ENCODE measurements at regions of chr1 and their contacts with region 1.

Region 1: DNA sequence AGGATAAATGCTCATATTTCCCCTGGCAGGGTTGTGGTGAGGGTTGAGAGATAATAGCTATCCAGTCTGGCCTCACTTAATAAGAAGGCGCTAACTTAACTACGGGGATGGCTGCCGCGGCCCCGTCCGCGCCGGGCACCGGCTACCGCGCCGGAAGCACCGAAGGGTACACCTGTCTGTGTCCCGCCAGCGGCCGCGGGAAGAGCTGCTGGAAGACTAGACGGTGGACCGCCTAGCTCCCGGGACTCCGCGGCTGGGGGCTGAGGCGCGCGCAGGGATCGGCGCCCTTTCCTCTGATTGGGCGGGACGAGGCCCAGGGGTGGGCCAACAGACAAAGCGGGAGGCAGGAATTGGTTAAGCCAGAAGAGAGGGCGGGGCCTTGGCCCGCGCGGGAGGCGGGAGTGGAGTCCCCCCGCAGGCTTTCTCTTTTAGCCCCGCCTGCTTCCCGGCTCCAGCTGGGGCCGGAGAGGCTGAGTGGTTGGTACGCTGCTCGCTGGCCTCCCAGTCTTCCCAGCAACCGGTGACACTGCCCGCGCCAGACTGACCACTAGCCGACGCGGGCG is at the start of gene ZNF672:
- DNase-seq: peak; percentile 77
- ATAC-seq: peak; percentile 84
- H3K4me3 ChIP-seq: peak within 1 kb of the TSS; percentile 92
- H3K27ac ChIP-seq: peak within 1 kb of the TSS; percentile 96
- H3K4me1 ChIP-seq: peaks cover 13% of the 10 kb centered on the region
- H3K27me3 ChIP-seq: no peaks in the 10 kb centered on the region
- CTCF ChIP-seq: no peak
- EP300 ChIP-seq: no peak
- POLR2A ChIP-seq: peak; percentile 83
- RAD21 ChIP-seq: no peak
- polyA plus RNA-seq, gene ZNF672: 2.9 to 5.2 TPM

Region 2: DNA sequence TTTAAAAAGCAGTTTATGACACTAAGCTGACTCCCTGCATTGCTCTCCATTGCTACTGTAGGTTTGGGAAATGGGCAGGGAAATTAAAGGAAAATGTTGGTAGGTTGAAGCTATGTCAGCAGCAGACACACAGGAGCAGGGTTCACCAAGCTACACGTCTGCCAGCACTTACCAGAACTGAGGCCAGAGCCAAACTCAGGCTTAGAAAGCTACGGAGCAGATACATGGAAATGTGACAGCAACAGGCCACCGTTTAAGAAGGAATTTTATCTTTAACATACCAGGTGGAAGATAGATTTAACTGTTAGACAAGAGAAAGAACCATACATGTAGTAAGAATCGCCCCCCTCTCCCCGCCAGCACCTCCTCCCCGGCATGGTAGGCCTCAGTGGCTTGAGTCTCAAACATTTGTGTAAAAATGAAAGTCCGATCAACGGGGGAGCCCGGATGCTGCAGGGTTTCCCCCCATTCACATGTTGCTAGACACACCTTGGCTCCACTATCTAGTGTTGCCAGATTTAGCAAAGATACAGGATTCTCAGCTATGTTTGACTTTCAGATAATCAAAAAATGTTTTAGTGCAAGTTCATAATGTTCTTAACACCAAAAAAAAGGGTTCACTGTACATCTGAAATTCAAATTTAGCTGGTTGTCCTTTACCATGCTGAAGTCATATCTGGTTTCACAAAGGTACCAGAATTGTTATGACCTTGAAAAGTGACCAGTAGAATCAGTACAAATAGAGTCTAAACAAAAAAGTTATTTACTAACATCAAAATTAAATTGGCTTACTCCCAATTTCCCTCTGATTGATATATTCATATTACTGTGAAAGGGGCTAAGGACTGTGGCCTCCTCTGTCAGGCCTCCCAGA is 209.7 kb before region 1 on chr1:
- CTCF ChIA-PET with region 1: no interaction called
- POLR2A ChIA-PET with region 1: no interaction called
- RAD21 ChIA-PET with region 1: no interaction called
- SMC1A ChIA-PET with region 1: no interaction called
- in situ Hi-C with region 1: no loop called
- intact Hi-C with region 1: no loop called
- DNase-seq: no peak
- ATAC-seq: no peak
- H3K4me3 ChIP-seq: no peak overlapping the region
- H3K27ac ChIP-seq: no peak overlapping the region
- H3K4me1 ChIP-seq: no peaks in the 10 kb centered on the region
- H3K27me3 ChIP-seq: no peaks in the 10 kb centered on the region
- CTCF ChIP-seq: no peak
- EP300 ChIP-seq: no peak
- POLR2A ChIP-seq: no peak
- RAD21 ChIP-seq: no peak

Region 3: DNA sequence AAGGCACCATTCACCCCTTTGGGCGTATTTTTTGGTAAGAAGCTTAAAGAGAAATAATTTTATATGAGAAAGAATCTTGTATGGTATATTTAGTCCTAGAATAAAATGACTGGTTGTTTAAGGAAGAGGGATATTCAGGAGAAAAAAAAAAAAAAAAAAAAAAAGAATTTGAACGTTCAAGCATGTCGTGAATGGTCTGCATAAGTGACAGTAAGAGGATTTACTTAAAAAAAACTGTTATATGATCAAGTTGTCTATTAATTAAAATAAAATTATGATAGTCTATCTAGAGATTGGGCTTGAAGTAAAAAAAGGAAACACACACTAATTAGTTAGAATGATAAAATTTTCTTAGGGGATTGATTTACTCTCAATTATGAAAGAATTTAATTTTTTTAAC is 123.6 kb before region 1 on chr1:
- CTCF ChIA-PET with region 1: no interaction called
- POLR2A ChIA-PET with region 1: no interaction called
- RAD21 ChIA-PET with region 1: no interaction called
- SMC1A ChIA-PET with region 1: no interaction called
- in situ Hi-C with region 1: no loop called
- intact Hi-C with region 1: no loop called
- DNase-seq: no peak
- ATAC-seq: no peak
- H3K4me3 ChIP-seq: no peak overlapping the region
- H3K27ac ChIP-seq: no peak overlapping the region
- H3K4me1 ChIP-seq: no peaks in the 10 kb centered on the region
- H3K27me3 ChIP-seq: no peaks in the 10 kb centered on the region
- CTCF ChIP-seq: no peak
- EP300 ChIP-seq: no peak
- POLR2A ChIP-seq: no peak
- RAD21 ChIP-seq: no peak

Region 4: DNA sequence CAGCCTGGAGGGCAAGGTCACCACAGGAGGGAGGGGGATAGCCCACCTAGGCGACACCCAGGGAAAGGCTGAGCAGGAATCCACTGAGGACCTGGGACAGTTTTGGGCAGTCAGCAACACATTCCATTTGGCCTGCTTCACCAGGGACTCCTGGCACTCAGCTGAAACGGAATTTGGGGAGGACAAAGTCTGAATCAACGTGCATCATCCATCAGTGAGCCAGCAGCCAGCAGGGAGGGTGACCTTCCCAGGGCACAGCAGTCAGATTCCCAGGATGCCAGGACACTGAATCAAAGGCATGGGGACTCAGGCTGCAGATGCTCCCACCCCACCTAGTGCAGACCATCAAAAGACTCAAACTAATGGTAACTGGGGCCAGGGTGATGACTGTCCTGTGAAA is 16.8 kb before region 1 on chr1:
- CTCF ChIA-PET with region 1: interaction called, 79 read pairs
- POLR2A ChIA-PET with region 1: interaction called, 83 read pairs
- RAD21 ChIA-PET with region 1: interaction called, 46 read pairs
- SMC1A ChIA-PET with region 1: interaction called, 48 read pairs
- in situ Hi-C with region 1: no loop called
- intact Hi-C with region 1: loop called (anchors 1 kb)
- DNase-seq: no peak
- ATAC-seq: no peak
- H3K4me3 ChIP-seq: no peak overlapping the region
- H3K27ac ChIP-seq: no peak overlapping the region; the same call in 1 of the 2 replicates
- H3K4me1 ChIP-seq: peaks cover 22% of the 10 kb centered on the region
- H3K27me3 ChIP-seq: no peaks in the 10 kb centered on the region
- CTCF ChIP-seq: no peak
- EP300 ChIP-seq: no peak
- POLR2A ChIP-seq: no peak
- RAD21 ChIP-seq: no peak

Region 5: DNA sequence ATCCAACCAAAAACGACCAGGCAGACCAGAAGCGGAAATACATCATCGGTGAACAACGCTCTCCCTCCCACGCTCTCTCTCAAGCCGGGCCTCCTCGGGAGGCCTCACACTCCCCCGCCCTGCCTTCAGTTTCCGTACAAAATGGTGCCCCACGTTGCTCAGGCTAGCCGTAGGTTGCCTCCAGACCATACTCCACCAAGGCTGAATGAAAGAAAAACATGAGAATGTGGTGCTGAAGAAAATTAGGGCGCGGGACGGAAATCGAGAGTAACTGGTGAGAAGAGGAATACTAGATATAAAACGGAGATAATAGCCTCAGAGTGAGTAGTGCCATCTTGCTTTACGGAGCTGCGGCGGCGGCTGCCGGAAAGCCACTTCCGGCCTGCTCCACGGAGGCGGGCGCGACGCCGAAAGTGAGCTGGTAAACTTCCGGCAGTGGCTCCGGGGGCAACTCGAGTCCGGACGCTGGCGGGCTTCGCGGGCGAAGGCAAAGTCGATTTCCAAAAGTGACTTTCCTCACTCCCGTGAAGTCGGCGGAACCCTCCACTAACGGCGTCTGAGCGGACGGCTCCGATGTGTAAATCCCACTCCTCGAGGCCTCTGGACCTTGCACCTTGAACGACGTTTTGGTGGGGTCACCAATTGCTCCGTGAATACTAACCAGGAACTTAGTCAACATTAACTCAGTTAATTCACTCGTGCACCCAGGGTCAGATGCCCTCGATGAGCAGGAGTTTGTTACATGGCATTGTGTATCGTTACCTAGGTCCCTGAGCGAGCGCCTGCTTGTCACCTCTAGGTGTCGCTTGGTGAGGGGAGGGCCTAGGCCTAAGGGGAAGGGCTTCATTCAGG is 11.7 kb before region 1 on chr1 and contains the start of gene SH3BP5L:
- CTCF ChIA-PET with region 1: interaction called, 79 read pairs
- POLR2A ChIA-PET with region 1: interaction called, 83 read pairs
- RAD21 ChIA-PET with region 1: interaction called, 46 read pairs
- SMC1A ChIA-PET with region 1: interaction called, 48 read pairs
- in situ Hi-C with region 1: no loop called
- intact Hi-C with region 1: loop called (anchors 1 kb)
- DNase-seq: peak; percentile 85
- ATAC-seq: peak; percentile 91
- H3K4me3 ChIP-seq: peak within 1 kb of the TSS; percentile 79
- H3K27ac ChIP-seq: peak within 1 kb of the TSS; percentile 98
- H3K4me1 ChIP-seq: peaks cover 13% of the 10 kb centered on the region
- H3K27me3 ChIP-seq: no peaks in the 10 kb centered on the region
- CTCF ChIP-seq: peak; percentile 83 to 89 (median 84); a peak in 5 of 6 replicates
- EP300 ChIP-seq: no peak
- POLR2A ChIP-seq: peak; percentile 82
- RAD21 ChIP-seq: peak; percentile 51; the same call in 1 of the 2 replicates
- polyA plus RNA-seq, gene SH3BP5L: 1.1 to 1.6 TPM

Region 6: GRCh38 chr1:248858891-248859889 is 21.3 kb after region 1 on chr1 and contains the start of gene ZNF692:
- CTCF ChIA-PET with region 1: interaction called, 60 read pairs
- POLR2A ChIA-PET with region 1: interaction called, 47 read pairs
- RAD21 ChIA-PET with region 1: interaction called, 25 read pairs
- SMC1A ChIA-PET with region 1: interaction called, 20 read pairs
- in situ Hi-C with region 1: no loop called
- intact Hi-C with region 1: loop called (anchors 1 kb)
- DNase-seq: peak; percentile 85
- ATAC-seq: peak; percentile 86
- H3K4me3 ChIP-seq: peak within 1 kb of the TSS; percentile 95
- H3K27ac ChIP-seq: peak within 1 kb of the TSS; percentile 82
- H3K4me1 ChIP-seq: peaks cover 11% of the 10 kb centered on the region
- H3K27me3 ChIP-seq: no peaks in the 10 kb centered on the region
- CTCF ChIP-seq: no peak
- EP300 ChIP-seq: no peak
- POLR2A ChIP-seq: peak; percentile 91
- RAD21 ChIP-seq: no peak
- polyA plus RNA-seq, gene ZNF692: 5.3 to 18.5 TPM

Region 7: GRCh38 chr1:248873409-248873992 is 35.6 kb after region 1 on chr1:
- CTCF ChIA-PET with region 1: interaction called, 9 read pairs
- POLR2A ChIA-PET with region 1: interaction called, 12 read pairs
- RAD21 ChIA-PET with region 1: interaction called, 9 read pairs
- SMC1A ChIA-PET with region 1: interaction called, 5 read pairs
- in situ Hi-C with region 1: no loop called
- intact Hi-C with region 1: loop called (anchors 1 kb)
- DNase-seq: peak; percentile 98
- ATAC-seq: peak; percentile 87
- H3K4me3 ChIP-seq: peak overlapping the region; percentile 65
- H3K27ac ChIP-seq: peak overlapping the region; percentile 85
- H3K4me1 ChIP-seq: peaks cover 4% of the 10 kb centered on the region; the same call in 1 of the 2 replicates
- H3K27me3 ChIP-seq: no peaks in the 10 kb centered on the region
- CTCF ChIP-seq: no peak
- EP300 ChIP-seq: peak in 1 of 2 experiments; percentile 77; a peak in 1 of 4 replicates
- POLR2A ChIP-seq: peak; percentile 85
- RAD21 ChIP-seq: no peak

Region 8: GRCh38 chr1:248906009-248906752 is 68.3 kb after region 1 on chr1 and contains the start of gene PGBD2:
- CTCF ChIA-PET with region 1: interaction called, 8 read pairs
- POLR2A ChIA-PET with region 1: interaction called, 10 read pairs
- RAD21 ChIA-PET with region 1: interaction called, 6 read pairs
- SMC1A ChIA-PET with region 1: interaction called, 6 read pairs
- in situ Hi-C with region 1: no loop called
- intact Hi-C with region 1: loop called (anchors 1 kb)
- DNase-seq: peak; percentile 66
- ATAC-seq: peak; percentile 94
- H3K4me3 ChIP-seq: peak within 1 kb of the TSS; percentile 92
- H3K27ac ChIP-seq: peak within 1 kb of the TSS; percentile 82
- H3K4me1 ChIP-seq: peaks cover 2% of the 10 kb centered on the region; the same call in 1 of the 2 replicates
- H3K27me3 ChIP-seq: no peaks in the 10 kb centered on the region
- CTCF ChIP-seq: peak; percentile 57 to 80 (median 75)
- EP300 ChIP-seq: no peak
- POLR2A ChIP-seq: peak; percentile 98
- RAD21 ChIP-seq: peak; percentile 63
- polyA plus RNA-seq, gene PGBD2: 4.7 to 5.6 TPM

Region 9: DNA sequence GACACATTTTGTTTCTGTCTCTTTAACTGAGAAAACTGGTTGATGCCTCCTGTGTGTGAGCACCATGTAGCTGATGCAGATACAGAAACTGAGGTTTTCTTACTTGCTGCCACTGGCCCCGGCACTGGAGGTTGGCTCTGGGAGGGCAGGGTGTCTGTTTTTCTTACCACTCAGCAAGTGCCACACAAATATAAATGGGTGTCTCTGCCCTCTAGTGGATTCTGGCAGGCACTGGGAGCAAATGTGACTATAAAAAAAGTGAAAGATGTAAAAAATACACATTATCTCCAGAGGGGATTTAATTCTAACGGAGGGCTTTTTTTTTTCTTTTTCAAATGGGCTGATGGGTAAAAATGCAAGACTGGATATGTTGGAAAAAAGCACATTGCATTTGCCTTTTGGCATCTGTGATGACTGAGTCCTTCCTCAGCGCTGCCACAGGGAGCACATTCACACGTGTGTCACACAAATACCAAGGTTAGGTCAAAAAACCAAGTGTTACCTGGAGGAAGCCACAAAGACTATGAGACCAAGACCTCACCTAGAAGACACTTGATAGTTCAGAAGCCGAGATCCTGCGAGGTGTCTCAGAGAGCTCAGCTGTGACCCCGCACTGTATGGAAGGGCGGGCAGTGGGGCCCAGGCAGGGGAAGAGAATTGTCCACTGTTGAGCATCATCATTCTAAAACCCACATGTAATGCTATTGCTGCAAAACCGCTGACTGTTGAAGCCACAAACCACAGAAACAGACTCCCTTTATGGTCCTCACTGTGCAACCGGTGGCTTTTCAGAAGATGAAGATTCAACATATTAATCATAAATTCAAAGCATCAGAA is 87.0 kb after region 1 on chr1:
- CTCF ChIA-PET with region 1: interaction called, 10 read pairs
- POLR2A ChIA-PET with region 1: no interaction called
- RAD21 ChIA-PET with region 1: interaction called, 4 read pairs
- SMC1A ChIA-PET with region 1: interaction called, 16 read pairs
- in situ Hi-C with region 1: no loop called
- intact Hi-C with region 1: no loop called
- DNase-seq: peak; percentile 33
- ATAC-seq: peak; percentile 99
- H3K4me3 ChIP-seq: 0 out of 2 replicates have a peak overlapping the region, but pooled peaks have one; percentile 4
- H3K27ac ChIP-seq: no peak overlapping the region
- H3K4me1 ChIP-seq: peaks cover 24% of the 10 kb centered on the region
- H3K27me3 ChIP-seq: no peaks in the 10 kb centered on the region
- CTCF ChIP-seq: peak; percentile 64 to 71 (median 65)
- EP300 ChIP-seq: no peak
- POLR2A ChIP-seq: no peak
- RAD21 ChIP-seq: peak; percentile 68

Measured in GM12878 (cell line).